ENCODE measurements at regions of chr12 and their contacts with region 1.

Region 1: DNA sequence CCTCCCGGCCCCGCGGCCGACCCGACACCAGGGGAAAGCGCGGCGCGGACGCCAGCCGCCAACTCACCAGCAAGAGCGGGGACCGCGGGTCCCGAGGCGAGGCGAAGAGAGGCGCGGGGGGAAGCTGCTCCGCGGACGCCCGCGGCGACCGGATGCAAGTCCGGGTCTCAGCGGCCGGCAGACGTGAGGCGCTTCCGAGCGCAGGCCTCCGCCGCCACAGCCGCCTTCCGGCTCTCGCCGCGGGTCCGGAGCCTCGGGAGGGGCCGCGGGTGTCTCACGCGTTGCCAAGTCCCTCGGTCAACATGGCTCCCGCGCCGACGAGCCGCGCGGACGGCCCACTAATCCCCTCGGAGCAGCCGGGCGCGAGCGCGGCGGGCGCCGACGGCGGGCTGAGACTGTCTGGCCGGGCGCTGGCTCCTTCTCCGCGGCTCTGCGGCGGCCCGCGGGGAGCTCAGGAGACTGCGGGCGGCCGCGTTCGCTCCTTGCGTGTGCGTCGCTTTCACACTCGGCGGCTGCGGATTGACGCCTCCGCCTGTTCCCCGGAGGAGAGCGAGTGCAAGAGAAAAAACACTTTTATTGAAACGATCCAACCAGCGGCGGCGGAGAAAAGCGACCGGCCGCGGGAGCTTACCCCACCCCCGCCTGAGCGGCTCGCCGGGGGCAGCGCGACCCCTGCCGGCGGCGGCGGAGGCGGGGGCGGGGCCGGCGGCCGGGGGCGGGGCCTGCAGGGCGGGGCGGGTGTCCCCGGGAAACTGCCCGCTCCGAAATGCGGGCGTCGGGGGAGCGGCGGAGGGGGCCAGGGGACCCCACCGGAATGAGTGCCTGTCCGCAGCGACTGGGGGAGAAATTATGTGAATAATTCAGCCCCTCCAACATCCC is at the start of gene CDK17:
- DNase-seq: no peak
- ATAC-seq: peak; percentile 59
- H3K4me3 ChIP-seq: peak within 1 kb of the TSS; percentile 92
- H3K27ac ChIP-seq: peak within 1 kb of the TSS; percentile 96
- H3K4me1 ChIP-seq: peaks cover 24% of the 10 kb centered on the region; the same call in 1 of the 2 replicates
- H3K27me3 ChIP-seq: no peaks in the 10 kb centered on the region
- CTCF ChIP-seq: peak in 2 of 3 experiments; percentile 36 to 58; a peak in 3 of 6 replicates
- EP300 ChIP-seq: no peak
- POLR2A ChIP-seq: peak; percentile 67
- RAD21 ChIP-seq: peak; percentile 58
- polyA plus RNA-seq, gene CDK17: 5.6 to 6.1 TPM

Region 2: DNA sequence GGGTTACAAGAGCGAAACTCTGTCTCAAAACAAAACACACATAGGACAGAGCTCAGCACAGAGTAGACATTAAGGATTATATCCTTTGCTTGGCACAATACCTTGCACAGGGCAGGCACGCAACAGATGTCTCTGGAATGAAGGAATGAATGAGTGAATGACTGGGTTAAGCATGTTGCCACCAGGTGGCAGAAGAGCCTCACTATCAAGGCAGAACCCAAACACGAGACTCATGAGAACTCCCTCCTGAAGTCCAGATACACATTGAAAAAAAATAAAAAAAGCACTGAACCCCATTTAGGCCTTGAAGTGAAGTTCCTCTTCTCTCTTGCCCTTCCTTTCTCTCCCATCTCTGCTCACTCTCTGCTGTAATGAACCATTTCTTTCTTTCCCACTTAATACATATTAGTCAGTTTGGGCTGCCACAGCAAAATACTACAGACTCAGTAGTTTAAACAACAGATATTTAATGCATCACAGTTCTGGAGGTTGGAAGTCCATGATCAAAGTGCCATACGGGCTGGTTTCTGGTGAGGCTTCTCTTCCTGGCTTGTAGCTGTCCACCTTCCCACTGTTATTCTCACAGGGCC is 338.2 kb before region 1 on chr12:
- CTCF ChIA-PET with region 1: interaction called, 5 read pairs
- POLR2A ChIA-PET with region 1: no interaction called
- RAD21 ChIA-PET with region 1: interaction called, 4 read pairs
- SMC1A ChIA-PET with region 1: interaction called, 4 read pairs
- in situ Hi-C with region 1: no loop called
- intact Hi-C with region 1: loop called (anchors 1 kb)
- DNase-seq: peak; percentile 79
- ATAC-seq: peak; percentile 96
- H3K4me3 ChIP-seq: no peak overlapping the region
- H3K27ac ChIP-seq: no peak overlapping the region
- H3K4me1 ChIP-seq: peaks cover 4% of the 10 kb centered on the region; the same call in 1 of the 2 replicates
- H3K27me3 ChIP-seq: no peaks in the 10 kb centered on the region
- CTCF ChIP-seq: peak; percentile 67 to 88 (median 81); a peak in 5 of 6 replicates
- EP300 ChIP-seq: no peak
- POLR2A ChIP-seq: no peak
- RAD21 ChIP-seq: peak; percentile 91

Region 3: GRCh38 chr12:96219698-96220206 is 180.4 kb before region 1 on chr12:
- CTCF ChIA-PET with region 1: interaction called, 37 read pairs
- POLR2A ChIA-PET with region 1: interaction called, 5 read pairs
- RAD21 ChIA-PET with region 1: interaction called, 53 read pairs
- SMC1A ChIA-PET with region 1: interaction called, 34 read pairs
- in situ Hi-C with region 1: no loop called
- intact Hi-C with region 1: loop called (anchors 5 kb)
- DNase-seq: no peak
- ATAC-seq: no peak
- H3K4me3 ChIP-seq: no peak overlapping the region
- H3K27ac ChIP-seq: no peak overlapping the region
- H3K4me1 ChIP-seq: peaks cover 13% of the 10 kb centered on the region
- H3K27me3 ChIP-seq: no peaks in the 10 kb centered on the region
- CTCF ChIP-seq: no peak
- EP300 ChIP-seq: no peak
- POLR2A ChIP-seq: no peak
- RAD21 ChIP-seq: no peak

Region 4: GRCh38 chr12:96343347-96343954 is 56.7 kb before region 1 on chr12:
- CTCF ChIA-PET with region 1: interaction called, 5 read pairs
- POLR2A ChIA-PET with region 1: no interaction called
- RAD21 ChIA-PET with region 1: interaction called, 11 read pairs
- SMC1A ChIA-PET with region 1: interaction called, 13 read pairs
- in situ Hi-C with region 1: no loop called
- intact Hi-C with region 1: loop called (anchors 10 kb)
- DNase-seq: peak; percentile 79
- ATAC-seq: peak; percentile 92
- H3K4me3 ChIP-seq: no peak overlapping the region
- H3K27ac ChIP-seq: no peak overlapping the region
- H3K4me1 ChIP-seq: peaks cover 8% of the 10 kb centered on the region; the same call in 1 of the 2 replicates
- H3K27me3 ChIP-seq: no peaks in the 10 kb centered on the region
- CTCF ChIP-seq: no peak
- EP300 ChIP-seq: peak in 1 of 2 experiments; percentile 67; a peak in 2 of 4 replicates
- POLR2A ChIP-seq: no peak
- RAD21 ChIP-seq: no peak

Region 5: DNA sequence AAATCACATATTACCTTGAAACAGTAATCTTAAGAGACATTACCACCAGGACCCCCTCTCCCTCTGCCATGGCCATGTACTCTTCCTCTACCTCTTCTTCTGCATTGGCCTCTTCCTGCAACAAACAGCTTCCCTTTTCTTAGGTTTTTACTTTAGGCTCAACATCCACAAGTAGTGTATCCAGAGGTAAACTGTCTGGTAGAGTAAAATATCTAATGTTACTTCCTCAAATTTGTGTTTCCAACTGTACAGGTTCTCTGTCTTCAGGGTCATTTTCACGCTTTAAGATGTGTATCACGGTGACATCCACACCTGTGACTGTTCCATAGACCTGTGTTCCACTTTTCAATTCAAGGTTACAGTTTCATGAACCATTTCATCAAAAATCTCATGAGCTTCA is 13.4 kb before region 1 on chr12:
- CTCF ChIA-PET with region 1: interaction called, 13 read pairs
- POLR2A ChIA-PET with region 1: interaction called, 5 read pairs
- RAD21 ChIA-PET with region 1: interaction called, 5 read pairs
- SMC1A ChIA-PET with region 1: interaction called, 19 read pairs
- in situ Hi-C with region 1: no loop called
- intact Hi-C with region 1: no loop called
- DNase-seq: no peak
- ATAC-seq: peak; percentile 42
- H3K4me3 ChIP-seq: no peak overlapping the region
- H3K27ac ChIP-seq: no peak overlapping the region
- H3K4me1 ChIP-seq: no peaks in the 10 kb centered on the region
- H3K27me3 ChIP-seq: no peaks in the 10 kb centered on the region
- CTCF ChIP-seq: no peak
- EP300 ChIP-seq: no peak
- POLR2A ChIP-seq: no peak
- RAD21 ChIP-seq: no peak

Region 6: DNA sequence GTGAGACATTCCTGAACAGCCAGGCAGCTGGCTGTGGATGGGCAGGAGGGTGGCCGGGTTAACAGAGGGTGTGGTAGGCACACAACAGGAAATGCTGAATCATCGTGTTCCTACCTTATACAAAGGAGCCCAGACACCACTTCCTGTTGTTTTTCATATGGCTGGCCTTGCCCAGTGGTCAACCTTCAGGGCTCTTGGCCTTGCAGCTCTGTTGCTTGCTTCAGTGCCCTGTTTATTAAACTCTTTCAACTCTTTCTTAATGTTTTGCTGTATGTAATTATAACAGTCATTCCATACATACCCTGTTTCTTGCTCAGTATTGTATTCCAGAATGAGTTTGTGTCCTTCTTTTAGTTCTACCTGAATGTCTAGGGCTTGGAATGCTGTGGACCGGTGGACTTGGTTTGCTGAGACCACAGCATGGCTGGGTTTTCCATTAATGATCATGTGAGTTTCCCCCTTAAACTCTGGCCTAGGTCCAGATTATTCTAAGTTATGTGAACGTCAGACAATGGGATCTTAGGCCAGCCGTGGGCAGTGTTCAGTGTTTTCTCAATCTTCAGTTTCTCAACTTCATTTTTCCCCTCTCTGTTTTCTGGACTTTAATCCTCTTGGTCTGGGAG is 101.1 kb after region 1 on chr12:
- CTCF ChIA-PET with region 1: interaction called, 13 read pairs
- POLR2A ChIA-PET with region 1: interaction called, 3 read pairs
- RAD21 ChIA-PET with region 1: interaction called, 11 read pairs
- SMC1A ChIA-PET with region 1: interaction called, 6 read pairs
- in situ Hi-C with region 1: no loop called
- intact Hi-C with region 1: loop called (anchors 1 kb)
- DNase-seq: peak; percentile 69
- ATAC-seq: peak; percentile 90
- H3K4me3 ChIP-seq: no peak overlapping the region
- H3K27ac ChIP-seq: peak overlapping the region; percentile 62
- H3K4me1 ChIP-seq: peaks cover 33% of the 10 kb centered on the region
- H3K27me3 ChIP-seq: no peaks in the 10 kb centered on the region
- CTCF ChIP-seq: no peak
- EP300 ChIP-seq: no peak
- POLR2A ChIP-seq: no peak
- RAD21 ChIP-seq: no peak

Measured in GM12878 (cell line).